ENCODE measurements at regions of chr17 and their contacts with region 1.

Region 1: DNA sequence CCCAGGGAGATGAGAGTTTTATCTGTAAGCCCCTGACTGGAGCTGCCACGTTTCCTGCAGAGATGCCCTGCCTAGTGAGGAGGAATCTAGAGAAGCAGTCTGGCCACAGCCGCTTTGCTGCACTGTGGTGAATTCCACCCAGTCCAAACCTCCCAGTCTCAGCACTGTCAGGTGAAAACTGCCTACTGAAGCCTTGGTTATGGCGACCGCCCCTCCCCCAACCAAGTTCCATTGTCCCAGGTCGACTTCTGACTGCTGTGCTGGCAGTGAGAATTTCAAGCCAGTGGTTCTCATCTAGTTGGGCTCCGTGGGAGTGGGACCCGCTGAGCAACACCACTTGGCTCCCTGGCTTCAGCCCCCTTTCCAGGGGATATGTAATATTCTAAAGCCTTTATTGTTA is 10.2 kb upstream of the LYZL6 start:
- DNase-seq: no peak
- H3K4me3 ChIP-seq: no peak overlapping the region
- H3K27ac ChIP-seq: no peak overlapping the region
- H3K4me1 ChIP-seq: no peaks in the 10 kb centered on the region
- H3K27me3 ChIP-seq: no peaks in the 10 kb centered on the region
- CTCF ChIP-seq: no peak
- POLR2A ChIP-seq: no peak

Region 2: GRCh38 chr17:33955461-33955860 is 1998.3 kb before region 1 on chr17:
- intact Hi-C with region 1: loop called (anchors 5 kb)
- DNase-seq: no peak
- H3K4me3 ChIP-seq: no peak overlapping the region
- H3K27ac ChIP-seq: no peak overlapping the region
- H3K4me1 ChIP-seq: no peaks in the 10 kb centered on the region
- H3K27me3 ChIP-seq: no peaks in the 10 kb centered on the region
- CTCF ChIP-seq: no peak
- POLR2A ChIP-seq: no peak

Measured in vagina (tissue), 2 donors.